B cell (primary cell): ENCODE measurements at regions of chr5 and their contacts with region 1.

Region 1: DNA sequence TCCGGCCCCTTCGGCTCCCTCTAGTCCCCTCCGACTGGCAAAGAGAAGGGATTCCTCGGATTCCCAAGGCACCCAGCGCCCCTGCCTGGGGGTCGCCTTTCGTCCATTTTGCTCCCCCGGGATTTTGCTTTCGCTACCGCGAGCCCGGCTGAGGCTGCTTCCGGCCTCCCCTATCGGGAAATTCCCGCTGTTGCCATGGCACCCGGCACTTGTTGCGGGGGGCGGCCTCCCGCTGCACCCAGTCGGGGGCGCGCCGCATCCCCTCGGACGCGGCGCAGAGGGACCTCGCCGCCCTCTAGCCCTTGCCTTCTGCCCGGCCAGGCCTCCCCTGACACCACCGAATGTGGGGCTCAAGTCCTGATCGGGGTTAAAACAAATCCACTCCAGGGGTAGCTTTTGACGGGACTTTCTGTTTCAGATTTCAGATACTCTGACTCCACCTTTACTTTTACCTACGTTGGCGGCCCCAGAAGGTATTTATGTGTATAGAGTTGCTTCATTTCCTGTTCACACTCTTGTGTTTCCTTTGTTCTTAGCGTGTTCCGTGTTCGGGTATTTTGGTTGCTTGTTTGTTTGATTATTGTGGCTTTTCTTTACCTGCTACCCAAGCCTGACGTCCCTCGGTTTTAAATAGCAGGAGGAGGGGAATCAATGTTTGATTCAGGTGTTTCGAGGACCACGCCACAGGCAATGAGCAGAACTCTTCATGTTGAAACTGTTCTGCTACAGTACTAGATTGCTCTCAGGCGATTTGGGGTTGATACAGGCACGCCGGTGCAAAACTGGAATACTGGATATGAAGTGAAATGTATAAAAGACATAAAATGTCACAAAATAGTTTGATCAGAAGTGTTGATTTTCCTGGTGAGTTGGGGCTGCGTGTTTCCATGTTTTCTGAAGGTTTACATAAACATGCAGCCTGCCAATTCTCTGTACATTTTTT is 1.5 kb downstream of the PARP8 start:
- DNase-seq: peak; percentile 96
- ATAC-seq: peak; percentile 72
- H3K4me3 ChIP-seq: peak overlapping the region; percentile 76 to 99 (median 98)
- H3K4me3 Mint-ChIP-seq: peak overlapping the region; percentile 99
- H3K27ac ChIP-seq: peak overlapping the region; percentile 99
- H3K27ac Mint-ChIP-seq: peak overlapping the region; percentile 99
- H3K4me1 ChIP-seq: peaks cover 26 to 29% of the 10 kb centered on the region in 2 donors
- H3K4me1 Mint-ChIP-seq: peaks cover 47% of the 10 kb centered on the region
- H3K27me3 ChIP-seq: no peaks in the 10 kb centered on the region
- H3K27me3 Mint-ChIP-seq: no peaks in the 10 kb centered on the region
- CTCF ChIP-seq: no peak

Region 2: DNA sequence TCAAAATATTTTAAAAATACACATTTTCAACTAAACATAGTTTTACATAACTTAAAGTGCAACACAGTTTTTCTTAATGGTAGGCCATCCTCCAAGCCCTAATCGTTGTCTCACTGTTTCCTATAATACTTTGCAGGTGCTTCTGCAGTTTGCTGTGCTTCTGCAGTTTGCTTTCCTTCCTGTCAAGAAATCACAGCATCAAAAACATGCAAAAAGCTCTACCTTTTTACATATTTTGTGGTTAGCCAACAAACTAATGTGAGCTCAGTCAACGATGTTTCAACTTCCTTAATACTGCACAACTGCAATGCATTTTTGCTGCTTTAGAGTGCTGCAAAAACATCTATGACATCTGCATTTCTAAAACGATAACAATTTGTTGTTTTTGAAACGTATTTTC is 252.0 kb before region 1 on chr5:
- CTCF ChIA-PET with region 1: no interaction called
- POLR2A ChIA-PET with region 1: no interaction called
- intact Hi-C with region 1: loop called (anchors 10 kb)
- DNase-seq: peak; percentile 79
- ATAC-seq: peak; percentile 87
- H3K4me3 ChIP-seq: peak overlapping the region in 1 of 5 experiments; percentile 36
- H3K4me3 Mint-ChIP-seq: peak overlapping the region; percentile 65
- H3K27ac ChIP-seq: peak overlapping the region in 1 of 2 donors; percentile 64
- H3K27ac Mint-ChIP-seq: peak overlapping the region; percentile 78
- H3K4me1 ChIP-seq: peaks cover 32% of the 10 kb centered on the region in 2 donors
- H3K4me1 Mint-ChIP-seq: peaks cover 69% of the 10 kb centered on the region
- H3K27me3 ChIP-seq: no peaks in the 10 kb centered on the region
- H3K27me3 Mint-ChIP-seq: no peaks in the 10 kb centered on the region
- CTCF ChIP-seq: no peak

Region 3: GRCh38 chr5:50440651-50441492 is 227.1 kb before region 1 on chr5 and contains the start of gene EMB:
- CTCF ChIA-PET with region 1: interaction called, 6 read pairs
- POLR2A ChIA-PET with region 1: interaction called, 19 read pairs
- intact Hi-C with region 1: loop called (anchors 1 kb)
- DNase-seq: peak; percentile 91
- ATAC-seq: peak; percentile 74
- H3K4me3 ChIP-seq: peak within 1 kb of the TSS; percentile 64 to 86 (median 79)
- H3K4me3 Mint-ChIP-seq: peak within 1 kb of the TSS; percentile 95
- H3K27ac ChIP-seq: peak within 1 kb of the TSS; percentile 85 to 96
- H3K27ac Mint-ChIP-seq: peak within 1 kb of the TSS; percentile 96
- H3K4me1 ChIP-seq: peaks cover 38 to 44% of the 10 kb centered on the region in 2 donors
- H3K4me1 Mint-ChIP-seq: peaks cover 64% of the 10 kb centered on the region
- H3K27me3 ChIP-seq: no peaks in the 10 kb centered on the region
- H3K27me3 Mint-ChIP-seq: no peaks in the 10 kb centered on the region
- CTCF ChIP-seq: peak; percentile 56
- total RNA-seq, gene EMB: 95.5 and 95.7 TPM in 2 replicates

Region 4: GRCh38 chr5:50606179-50606578 is 61.7 kb before region 1 on chr5:
- CTCF ChIA-PET with region 1: no interaction called
- POLR2A ChIA-PET with region 1: no interaction called
- intact Hi-C with region 1: loop called (anchors 5 kb)
- DNase-seq: no peak
- ATAC-seq: no peak
- H3K4me3 ChIP-seq: no peak overlapping the region
- H3K4me3 Mint-ChIP-seq: no peak overlapping the region
- H3K27ac ChIP-seq: no peak overlapping the region
- H3K27ac Mint-ChIP-seq: no peak overlapping the region
- H3K4me1 ChIP-seq: no peaks in the 10 kb centered on the region
- H3K4me1 Mint-ChIP-seq: peaks cover 7% of the 10 kb centered on the region
- H3K27me3 ChIP-seq: no peaks in the 10 kb centered on the region
- H3K27me3 Mint-ChIP-seq: peaks cover 6% of the 10 kb centered on the region
- CTCF ChIP-seq: no peak

Region 5: DNA sequence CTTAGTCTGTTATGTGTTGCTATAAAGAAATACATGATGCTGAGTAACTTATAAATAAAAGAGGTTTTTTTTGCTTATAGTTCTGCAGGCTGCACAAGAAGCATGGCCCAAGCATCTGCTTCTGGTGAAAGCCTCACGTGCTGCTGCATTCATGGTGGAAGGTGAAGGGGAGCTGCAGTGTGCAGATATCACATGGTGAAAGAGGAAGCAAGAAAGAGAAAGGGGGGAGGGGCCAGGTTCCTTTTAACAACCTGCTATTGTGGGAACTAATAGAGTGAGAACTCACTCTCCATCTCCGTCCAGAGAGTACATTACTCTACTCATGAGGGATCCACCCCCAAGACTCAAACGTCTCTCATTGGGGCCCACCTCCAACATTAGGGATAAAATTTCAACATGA is 14.0 kb before region 1 on chr5:
- CTCF ChIA-PET with region 1: interaction called, 3 read pairs
- POLR2A ChIA-PET with region 1: no interaction called
- intact Hi-C with region 1: loop called (anchors 1 kb)
- DNase-seq: peak; percentile 86
- ATAC-seq: peak; percentile 95
- H3K4me3 ChIP-seq: peak overlapping the region in 2 of 5 experiments; percentile 19 to 40
- H3K4me3 Mint-ChIP-seq: peak overlapping the region; percentile 71
- H3K27ac ChIP-seq: peak overlapping the region in 1 of 2 donors; percentile 36
- H3K27ac Mint-ChIP-seq: peak overlapping the region; percentile 77
- H3K4me1 ChIP-seq: peaks cover 17 to 22% of the 10 kb centered on the region in 2 donors
- H3K4me1 Mint-ChIP-seq: peaks cover 22% of the 10 kb centered on the region
- H3K27me3 ChIP-seq: no peaks in the 10 kb centered on the region
- H3K27me3 Mint-ChIP-seq: no peaks in the 10 kb centered on the region
- CTCF ChIP-seq: no peak

Region 6: GRCh38 chr5:50711273-50711672 is 43.3 kb after region 1 on chr5:
- CTCF ChIA-PET with region 1: no interaction called
- POLR2A ChIA-PET with region 1: no interaction called
- intact Hi-C with region 1: loop called (anchors 2 kb)
- DNase-seq: peak; percentile 82
- ATAC-seq: peak; percentile 87
- H3K4me3 ChIP-seq: peak overlapping the region in 4 of 5 experiments; percentile 11 to 43 (median 33)
- H3K4me3 Mint-ChIP-seq: peak overlapping the region; percentile 80
- H3K27ac ChIP-seq: peak overlapping the region; percentile 67 to 78
- H3K27ac Mint-ChIP-seq: peak overlapping the region; percentile 83
- H3K4me1 ChIP-seq: peaks cover 24 to 29% of the 10 kb centered on the region in 2 donors
- H3K4me1 Mint-ChIP-seq: peaks cover 58% of the 10 kb centered on the region
- H3K27me3 ChIP-seq: no peaks in the 10 kb centered on the region
- H3K27me3 Mint-ChIP-seq: no peaks in the 10 kb centered on the region
- CTCF ChIP-seq: no peak

Region 7: DNA sequence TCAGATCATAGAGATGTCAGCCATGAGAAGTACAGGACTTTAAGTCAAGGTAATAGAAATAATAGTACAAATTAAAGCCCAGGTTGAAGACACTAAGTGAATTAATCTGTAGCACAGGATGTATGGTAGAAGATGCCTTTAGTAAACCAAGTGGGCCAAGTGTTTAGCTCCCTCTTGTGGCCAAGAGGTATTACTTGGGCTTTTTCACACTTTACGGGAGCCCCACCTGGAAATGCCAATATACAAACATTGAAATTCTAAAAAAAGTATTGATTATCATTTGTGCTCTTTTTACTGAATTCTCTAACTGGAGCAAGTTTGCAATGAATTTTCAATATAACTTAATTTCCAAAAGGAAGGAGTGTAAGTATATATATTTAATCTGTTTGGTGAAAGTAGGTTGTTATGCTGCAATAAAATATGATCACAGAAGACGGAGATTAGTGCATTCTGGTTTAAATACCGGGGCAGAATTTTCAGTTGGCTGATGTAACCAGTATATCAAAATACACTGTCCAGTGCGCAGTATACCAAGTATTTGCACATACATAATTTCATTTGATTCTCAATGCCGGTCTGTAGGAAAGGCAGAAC is 83.2 kb after region 1 on chr5:
- CTCF ChIA-PET with region 1: interaction called, 3 read pairs
- POLR2A ChIA-PET with region 1: interaction called, 5 read pairs
- intact Hi-C with region 1: loop called (anchors 2 kb)
- DNase-seq: peak; percentile 79
- ATAC-seq: peak; percentile 80
- H3K4me3 ChIP-seq: no peak overlapping the region
- H3K4me3 Mint-ChIP-seq: no peak overlapping the region
- H3K27ac ChIP-seq: peak overlapping the region in 1 of 2 donors; percentile 39
- H3K27ac Mint-ChIP-seq: no peak overlapping the region
- H3K4me1 ChIP-seq: peaks cover 0 to 2% of the 10 kb centered on the region in 2 donors
- H3K4me1 Mint-ChIP-seq: peaks cover 29% of the 10 kb centered on the region
- H3K27me3 ChIP-seq: no peaks in the 10 kb centered on the region
- H3K27me3 Mint-ChIP-seq: no peaks in the 10 kb centered on the region
- CTCF ChIP-seq: peak; percentile 92

Region 8: GRCh38 chr5:51860532-51861018 is 1192.7 kb after region 1 on chr5:
- CTCF ChIA-PET with region 1: no interaction called
- POLR2A ChIA-PET with region 1: no interaction called
- intact Hi-C with region 1: no loop called
- DNase-seq: no peak
- ATAC-seq: no peak
- H3K4me3 ChIP-seq: no peak overlapping the region
- H3K4me3 Mint-ChIP-seq: no peak overlapping the region
- H3K27ac ChIP-seq: no peak overlapping the region
- H3K27ac Mint-ChIP-seq: no peak overlapping the region
- H3K4me1 ChIP-seq: no peaks in the 10 kb centered on the region
- H3K4me1 Mint-ChIP-seq: no peaks in the 10 kb centered on the region
- H3K27me3 ChIP-seq: no peaks in the 10 kb centered on the region
- H3K27me3 Mint-ChIP-seq: no peaks in the 10 kb centered on the region
- CTCF ChIP-seq: no peak